Caco-2 (cell line): ENCODE measurements at regions of chr1 and their contacts with region 1.

Region 1: DNA sequence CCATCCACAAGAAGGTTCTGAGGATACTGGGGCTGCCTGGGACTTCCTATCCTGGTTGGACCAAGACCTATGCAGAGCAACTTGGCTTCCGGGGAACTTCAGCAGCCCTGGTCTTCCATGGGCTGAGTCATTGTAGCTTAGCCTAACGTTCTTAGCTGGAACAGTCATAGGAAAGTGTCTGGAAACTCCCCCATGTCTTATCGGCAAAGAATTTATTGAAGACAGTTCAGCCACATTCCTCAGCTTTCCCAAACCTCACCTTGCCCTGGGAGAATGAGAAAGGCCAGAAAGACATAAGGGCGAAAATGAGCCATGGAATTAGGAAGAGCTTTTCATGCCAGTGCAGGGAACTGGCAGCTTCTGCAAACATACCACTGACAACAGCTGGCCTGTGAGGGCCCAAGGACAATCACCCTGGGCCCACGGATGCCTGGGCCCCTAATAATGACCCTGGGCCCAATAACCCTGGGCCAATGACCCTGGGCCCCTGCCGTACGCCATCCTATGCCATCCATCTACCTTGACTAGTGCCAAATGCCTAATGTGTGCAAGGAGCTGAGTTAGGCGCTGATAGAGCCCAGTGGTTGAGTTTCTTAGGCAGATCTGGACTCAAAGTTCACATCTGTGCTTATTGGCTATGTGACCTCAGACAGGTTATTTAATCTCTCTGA is 114.4 kb upstream of the GADD45A start:
- DNase-seq: peak; percentile 71 to 81
- H3K4me3 ChIP-seq: no peak overlapping the region
- H3K4me3 Mint-ChIP-seq: peak overlapping the region; percentile 52
- H3K27ac Mint-ChIP-seq: peak overlapping the region; percentile 93
- H3K4me1 ChIP-seq: peaks cover 51% of the 10 kb centered on the region
- H3K4me1 Mint-ChIP-seq: peaks cover 38% of the 10 kb centered on the region
- H3K27me3 ChIP-seq: no peaks in the 10 kb centered on the region
- H3K27me3 Mint-ChIP-seq: no peaks in the 10 kb centered on the region
- CTCF ChIP-seq: no peak

Region 2: DNA sequence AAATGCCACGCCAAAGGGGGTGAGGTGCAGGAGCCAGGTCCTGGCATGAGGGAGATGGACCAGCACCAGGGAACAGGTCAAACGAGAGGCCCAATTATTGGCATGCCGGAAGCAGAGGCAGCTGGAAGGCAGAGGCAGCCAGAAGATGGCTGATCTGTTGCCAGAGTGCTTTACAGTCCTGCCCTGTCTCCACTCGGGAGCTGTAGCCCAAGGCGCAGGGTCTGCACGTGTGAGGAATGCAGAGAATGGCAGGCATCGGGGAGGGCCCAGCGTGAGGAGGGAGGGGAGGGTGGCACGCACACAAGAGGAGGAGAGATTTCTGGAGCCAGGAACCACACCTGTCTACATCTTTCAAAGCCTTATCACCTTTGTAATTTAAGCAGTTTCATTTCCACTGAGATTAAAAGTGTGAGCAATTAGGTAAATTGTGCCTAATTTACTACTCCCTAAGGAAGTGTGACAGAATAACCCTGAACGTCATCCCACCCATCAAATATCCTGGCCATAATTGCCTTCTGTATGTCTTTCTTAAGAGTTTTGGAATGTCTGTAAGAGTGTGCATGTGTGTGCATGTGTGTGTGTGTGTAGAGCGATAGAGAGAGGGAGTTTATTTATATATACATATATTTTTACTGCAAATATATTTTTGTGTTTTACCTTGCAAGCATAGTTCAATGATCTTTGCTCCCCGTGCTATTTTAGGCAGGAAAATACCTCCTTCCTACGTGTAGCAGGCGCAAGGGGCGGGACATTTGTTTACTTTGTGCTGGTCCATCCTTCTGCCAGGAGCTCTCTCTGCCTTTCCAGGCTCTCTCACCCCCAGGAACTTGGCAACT is 14.9 kb before region 1 on chr1:
- CTCF ChIA-PET with region 1: no interaction called
- POLR2A ChIA-PET with region 1: no interaction called
- intact Hi-C with region 1: loop called (anchors 2 kb)
- DNase-seq: peak; percentile 52 to 72
- H3K4me3 ChIP-seq: no peak overlapping the region
- H3K4me3 Mint-ChIP-seq: peak overlapping the region; percentile 6
- H3K27ac Mint-ChIP-seq: no peak overlapping the region
- H3K4me1 ChIP-seq: peaks cover 20% of the 10 kb centered on the region
- H3K4me1 Mint-ChIP-seq: peaks cover 25% of the 10 kb centered on the region
- H3K27me3 ChIP-seq: no peaks in the 10 kb centered on the region
- H3K27me3 Mint-ChIP-seq: no peaks in the 10 kb centered on the region
- CTCF ChIP-seq: no peak

Region 3: GRCh38 chr1:67594764-67595163 is 24.2 kb after region 1 on chr1:
- CTCF ChIA-PET with region 1: no interaction called
- POLR2A ChIA-PET with region 1: interaction called, 18 read pairs
- intact Hi-C with region 1: no loop called
- DNase-seq: no peak
- H3K4me3 ChIP-seq: no peak overlapping the region
- H3K4me3 Mint-ChIP-seq: no peak overlapping the region
- H3K27ac Mint-ChIP-seq: no peak overlapping the region
- H3K4me1 ChIP-seq: no peaks in the 10 kb centered on the region
- H3K4me1 Mint-ChIP-seq: peaks cover 9% of the 10 kb centered on the region
- H3K27me3 ChIP-seq: no peaks in the 10 kb centered on the region
- H3K27me3 Mint-ChIP-seq: no peaks in the 10 kb centered on the region
- CTCF ChIP-seq: no peak

Region 4: GRCh38 chr1:67614511-67614934 is 43.9 kb after region 1 on chr1:
- CTCF ChIA-PET with region 1: no interaction called
- POLR2A ChIA-PET with region 1: interaction called, 3 read pairs
- intact Hi-C with region 1: loop called (anchors 5 kb)
- DNase-seq: no peak
- H3K4me3 ChIP-seq: no peak overlapping the region
- H3K4me3 Mint-ChIP-seq: no peak overlapping the region
- H3K27ac Mint-ChIP-seq: no peak overlapping the region
- H3K4me1 ChIP-seq: no peaks in the 10 kb centered on the region
- H3K4me1 Mint-ChIP-seq: peaks cover 27% of the 10 kb centered on the region
- H3K27me3 ChIP-seq: no peaks in the 10 kb centered on the region
- H3K27me3 Mint-ChIP-seq: no peaks in the 10 kb centered on the region
- CTCF ChIP-seq: no peak

Region 5: DNA sequence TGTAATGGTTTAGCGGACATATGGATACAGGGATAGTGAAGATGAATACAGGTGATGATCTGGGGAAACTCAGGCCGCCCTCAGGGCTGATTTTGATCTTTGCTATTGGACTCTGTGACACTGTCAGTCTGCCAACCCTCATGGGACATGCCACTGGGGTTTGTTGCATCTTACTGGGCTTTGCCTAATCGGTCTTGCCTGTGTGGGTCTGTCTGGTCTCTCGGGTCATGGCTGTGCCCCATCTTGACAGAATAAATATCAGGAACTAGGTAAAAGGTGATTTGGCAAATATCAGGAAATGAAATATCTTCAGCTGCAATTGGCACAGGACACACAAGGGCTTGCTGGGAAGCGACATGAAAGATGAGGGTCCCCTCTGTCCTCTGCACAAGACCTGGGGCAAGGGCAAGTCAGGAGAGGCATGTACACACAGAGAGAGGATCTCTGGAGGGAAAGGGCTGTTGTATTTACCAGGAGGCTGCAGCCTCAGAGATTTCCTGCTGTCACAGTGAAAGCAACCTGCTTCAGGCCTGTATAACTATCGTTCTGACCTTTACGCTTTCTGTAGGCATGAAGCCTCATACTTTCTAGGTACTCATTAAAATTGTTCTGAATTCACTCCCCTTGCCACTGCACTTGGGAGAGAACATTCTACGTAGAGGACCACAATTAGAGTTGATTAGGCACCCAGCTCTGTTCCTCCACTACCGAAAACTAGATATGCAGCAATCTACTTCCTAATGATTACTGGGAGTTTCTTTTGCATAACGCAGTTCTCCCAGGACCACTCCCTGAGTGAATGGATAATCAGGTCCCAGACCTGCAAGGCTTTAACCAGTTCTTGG is 62.4 kb after region 1 on chr1:
- CTCF ChIA-PET with region 1: no interaction called
- POLR2A ChIA-PET with region 1: interaction called, 3 read pairs
- intact Hi-C with region 1: loop called (anchors 1 kb)
- DNase-seq: no peak
- H3K4me3 ChIP-seq: no peak overlapping the region
- H3K4me3 Mint-ChIP-seq: no peak overlapping the region
- H3K27ac Mint-ChIP-seq: peak overlapping the region; percentile 67
- H3K4me1 ChIP-seq: peaks cover 63% of the 10 kb centered on the region
- H3K4me1 Mint-ChIP-seq: peaks cover 34% of the 10 kb centered on the region
- H3K27me3 ChIP-seq: no peaks in the 10 kb centered on the region
- H3K27me3 Mint-ChIP-seq: no peaks in the 10 kb centered on the region
- CTCF ChIP-seq: no peak

Region 6: GRCh38 chr1:67700692-67701410 is 130.2 kb after region 1 on chr1:
- CTCF ChIA-PET with region 1: interaction called, 3 read pairs
- POLR2A ChIA-PET with region 1: no interaction called
- intact Hi-C with region 1: loop called (anchors 5 kb)
- DNase-seq: peak; percentile 85 to 90
- H3K4me3 ChIP-seq: no peak overlapping the region
- H3K4me3 Mint-ChIP-seq: peak overlapping the region; percentile 65
- H3K27ac Mint-ChIP-seq: peak overlapping the region; percentile 96
- H3K4me1 ChIP-seq: peaks cover 19% of the 10 kb centered on the region
- H3K4me1 Mint-ChIP-seq: peaks cover 15% of the 10 kb centered on the region
- H3K27me3 ChIP-seq: no peaks in the 10 kb centered on the region
- H3K27me3 Mint-ChIP-seq: no peaks in the 10 kb centered on the region
- CTCF ChIP-seq: peak; percentile 39 to 60

Region 7: DNA sequence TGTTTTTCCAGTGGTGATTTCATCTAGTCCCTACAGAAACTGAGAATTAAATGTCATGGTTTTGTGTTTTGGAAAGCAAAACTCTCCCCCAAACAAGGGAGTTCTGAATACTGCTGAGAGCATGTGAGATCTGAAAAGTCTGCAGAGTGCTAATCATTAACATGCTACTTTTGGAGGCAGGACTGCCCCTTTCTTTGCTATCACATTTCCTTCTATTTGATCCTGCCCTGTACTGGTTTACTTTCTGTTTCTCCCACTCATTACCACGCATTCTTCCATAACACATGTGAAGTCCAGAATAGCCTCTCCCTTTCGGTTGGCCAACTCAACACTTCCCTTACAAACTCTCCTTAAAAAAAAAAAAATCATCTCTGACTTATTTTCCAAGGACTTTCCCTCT is 178.0 kb after region 1 on chr1:
- CTCF ChIA-PET with region 1: no interaction called
- POLR2A ChIA-PET with region 1: interaction called, 4 read pairs
- intact Hi-C with region 1: loop called (anchors 2 kb)
- DNase-seq: peak; percentile 42 to 51
- H3K4me3 ChIP-seq: peak overlapping the region; percentile 9
- H3K4me3 Mint-ChIP-seq: peak overlapping the region; percentile 69
- H3K27ac Mint-ChIP-seq: peak overlapping the region; percentile 69
- H3K4me1 ChIP-seq: peaks cover 80% of the 10 kb centered on the region
- H3K4me1 Mint-ChIP-seq: peaks cover 30% of the 10 kb centered on the region
- H3K27me3 ChIP-seq: no peaks in the 10 kb centered on the region
- H3K27me3 Mint-ChIP-seq: no peaks in the 10 kb centered on the region
- CTCF ChIP-seq: no peak